Activated B cell treated with CpG ODN at 0.5 μM for 24 hours (primary cell): ENCODE measurements at regions of chrX and their contacts with region 1.

Region 1: GRCh38 chrX:114611018-114611619 is 27.2 kb downstream of the HTR2C start:
- DNase-seq: no peak
- ATAC-seq: peak; percentile 37
- H3K4me3 Mint-ChIP-seq: no peak overlapping the region
- H3K27ac Mint-ChIP-seq: no peak overlapping the region
- H3K4me1 Mint-ChIP-seq: no peaks in the 10 kb centered on the region
- H3K27me3 Mint-ChIP-seq: no peaks in the 10 kb centered on the region
- CTCF ChIP-seq: no peak

Region 2: GRCh38 chrX:114500621-114501020 is 110.5 kb before region 1 on chrX:
- CTCF ChIA-PET with region 1: no interaction called
- POLR2A ChIA-PET with region 1: no interaction called
- intact Hi-C with region 1: no loop called
- DNase-seq: no peak
- ATAC-seq: no peak
- H3K4me3 Mint-ChIP-seq: no peak overlapping the region
- H3K27ac Mint-ChIP-seq: no peak overlapping the region
- H3K4me1 Mint-ChIP-seq: no peaks in the 10 kb centered on the region
- H3K27me3 Mint-ChIP-seq: no peaks in the 10 kb centered on the region
- CTCF ChIP-seq: no peak

Region 3: DNA sequence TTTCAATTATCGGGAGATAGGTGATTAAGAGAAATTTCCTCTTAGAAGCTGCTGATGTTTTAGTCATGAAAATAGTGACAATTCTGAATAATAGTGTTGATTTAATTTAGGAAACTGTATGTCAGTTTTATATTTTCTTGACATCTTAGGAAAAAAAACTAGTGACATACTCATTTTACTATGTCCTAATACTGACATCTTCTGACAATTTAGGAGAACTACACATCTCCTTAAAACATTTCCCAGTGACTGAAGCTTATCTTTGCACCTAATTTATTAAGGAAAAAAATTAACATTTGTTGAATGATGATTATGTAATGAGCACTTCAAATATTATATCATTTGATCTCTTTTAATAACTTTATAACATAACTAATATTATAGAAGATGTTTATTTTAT is 536.1 kb after region 1 on chrX:
- CTCF ChIA-PET with region 1: no interaction called
- POLR2A ChIA-PET with region 1: no interaction called
- intact Hi-C with region 1: loop called (anchors 10 kb)
- DNase-seq: no peak
- ATAC-seq: no peak
- H3K4me3 Mint-ChIP-seq: no peak overlapping the region
- H3K27ac Mint-ChIP-seq: no peak overlapping the region
- H3K4me1 Mint-ChIP-seq: no peaks in the 10 kb centered on the region
- H3K27me3 Mint-ChIP-seq: no peaks in the 10 kb centered on the region
- CTCF ChIP-seq: no peak

Region 4: GRCh38 chrX:115642895-115643530 is 1031.9 kb after region 1 on chrX:
- CTCF ChIA-PET with region 1: no interaction called
- POLR2A ChIA-PET with region 1: no interaction called
- intact Hi-C with region 1: loop called (anchors 5 kb)
- DNase-seq: no peak
- ATAC-seq: no peak
- H3K4me3 Mint-ChIP-seq: no peak overlapping the region
- H3K27ac Mint-ChIP-seq: no peak overlapping the region
- H3K4me1 Mint-ChIP-seq: no peaks in the 10 kb centered on the region
- H3K27me3 Mint-ChIP-seq: no peaks in the 10 kb centered on the region
- CTCF ChIP-seq: no peak